ENCODE measurements at regions of chr2 and their contacts with region 1.

Region 1: GRCh38 chr2:218671654-218672566 is at the starts of genes RNF25 and STK36:
- DNase-seq: peak; percentile 78 to 88 (median 81)
- H3K4me3 ChIP-seq: peak within 1 kb of the TSS; percentile 77 to 97
- H3K4me3 Mint-ChIP-seq: peak within 1 kb of the TSS; percentile 95 to 98 (median 96)
- H3K27ac ChIP-seq: peak within 1 kb of the TSS; percentile 81
- H3K27ac Mint-ChIP-seq: peak within 1 kb of the TSS; percentile 89 to 98 (median 98)
- H3K4me1 ChIP-seq: peaks cover 18% of the 10 kb centered on the region
- H3K4me1 Mint-ChIP-seq: peaks cover 13 to 26% (median 19%) of the 10 kb centered on the region in 4 donors
- H3K27me3 ChIP-seq: no peaks in the 10 kb centered on the region
- H3K27me3 Mint-ChIP-seq: no peaks in the 10 kb centered on the region
- total RNA-seq, gene RNF25: 28.6 to 32.9 TPM
- total RNA-seq, gene STK36: 25.8 to 27.3 TPM

Region 2: GRCh38 chr2:218691234-218691633 is 19.3 kb after region 1 on chr2:
- CTCF ChIA-PET with region 1: interaction called, 14 read pairs
- POLR2A ChIA-PET with region 1: no interaction called
- intact Hi-C with region 1: no loop called
- DNase-seq: no peak
- H3K4me3 ChIP-seq: no peak overlapping the region
- H3K4me3 Mint-ChIP-seq: no peak overlapping the region
- H3K27ac ChIP-seq: no peak overlapping the region
- H3K27ac Mint-ChIP-seq: no peak overlapping the region
- H3K4me1 ChIP-seq: no peaks in the 10 kb centered on the region
- H3K4me1 Mint-ChIP-seq: peaks cover 0 to 4% (median 2%) of the 10 kb centered on the region in 4 donors
- H3K27me3 ChIP-seq: no peaks in the 10 kb centered on the region
- H3K27me3 Mint-ChIP-seq: no peaks in the 10 kb centered on the region

Region 3: GRCh38 chr2:218710687-218711549 is 39.0 kb after region 1 on chr2 and contains the start of gene TTLL4:
- CTCF ChIA-PET with region 1: interaction called, 18 read pairs
- POLR2A ChIA-PET with region 1: interaction called, 20 read pairs
- intact Hi-C with region 1: loop called (anchors 1 kb)
- DNase-seq: peak; percentile 98 to 99 (median 99)
- H3K4me3 ChIP-seq: peak within 1 kb of the TSS; percentile 55 to 78
- H3K4me3 Mint-ChIP-seq: peak within 1 kb of the TSS; percentile 88 to 98 (median 95)
- H3K27ac ChIP-seq: peak within 1 kb of the TSS; percentile 81
- H3K27ac Mint-ChIP-seq: peak within 1 kb of the TSS; percentile 79 to 96 (median 93)
- H3K4me1 ChIP-seq: peaks cover 16% of the 10 kb centered on the region
- H3K4me1 Mint-ChIP-seq: peaks cover 14 to 26% (median 18%) of the 10 kb centered on the region in 4 donors
- H3K27me3 ChIP-seq: no peaks in the 10 kb centered on the region
- H3K27me3 Mint-ChIP-seq: peaks cover 0 to under 1% of the 10 kb centered on the region in 2 donors
- total RNA-seq, gene TTLL4: 23.1 to 26.1 TPM

Measured in CD4-positive, alpha-beta memory T cell (primary cell).